WTC11 (cell line): ENCODE measurements at regions of chr19 and their contacts with region 1.

Region 1: DNA sequence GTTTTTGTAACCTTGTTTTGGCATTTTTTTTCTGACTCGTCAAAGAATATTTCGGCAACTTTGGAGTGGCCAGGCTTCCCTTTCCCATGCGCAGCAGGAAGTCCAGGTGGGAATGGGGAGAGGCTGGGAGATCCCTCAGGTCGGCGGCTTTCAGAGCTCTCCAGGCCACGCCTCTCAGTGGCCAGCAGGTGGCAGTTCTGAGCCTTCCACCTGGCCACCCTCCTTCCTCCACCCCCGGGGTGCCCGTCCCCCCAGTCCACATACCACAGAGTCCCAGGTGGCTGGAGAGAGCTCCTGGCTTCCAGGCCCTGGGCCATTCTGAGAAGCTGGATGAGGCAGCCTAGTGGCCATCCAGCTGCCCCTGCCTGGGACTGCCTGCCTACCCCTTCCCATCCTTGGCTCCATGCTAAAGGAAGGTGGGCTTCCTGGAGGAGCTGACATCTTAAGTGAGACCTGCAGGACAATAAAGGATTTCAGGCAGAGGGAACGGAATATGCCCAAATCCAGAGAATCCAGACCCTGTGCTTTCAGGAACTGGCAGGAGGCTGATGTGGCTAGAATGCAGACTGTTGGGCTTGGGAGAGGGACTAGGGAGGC is 46.3 kb downstream of the CCNE1 start:
- DNase-seq: peak; percentile 80
- ATAC-seq: peak; percentile 89
- H3K4me3 Mint-ChIP-seq: no peak overlapping the region
- H3K27ac Mint-ChIP-seq: no peak overlapping the region
- H3K4me1 Mint-ChIP-seq: peaks cover 13% of the 10 kb centered on the region
- H3K27me3 Mint-ChIP-seq: no peaks in the 10 kb centered on the region
- CTCF ChIP-seq: peak; percentile 74; the same call in 1 of the 2 replicates

Region 2: GRCh38 chr19:29771708-29772414 is 86.2 kb before region 1 on chr19:
- CTCF ChIA-PET with region 1: interaction called, 17 read pairs
- POLR2A ChIA-PET with region 1: no interaction called
- DNase-seq: peak; percentile 76
- ATAC-seq: peak; percentile 91
- H3K4me3 Mint-ChIP-seq: no peak overlapping the region
- H3K27ac Mint-ChIP-seq: no peak overlapping the region
- H3K4me1 Mint-ChIP-seq: peaks cover 15% of the 10 kb centered on the region
- H3K27me3 Mint-ChIP-seq: no peaks in the 10 kb centered on the region; the same call in 1 of the 2 replicates
- CTCF ChIP-seq: peak; percentile 33; the same call in 1 of the 2 replicates

Region 3: DNA sequence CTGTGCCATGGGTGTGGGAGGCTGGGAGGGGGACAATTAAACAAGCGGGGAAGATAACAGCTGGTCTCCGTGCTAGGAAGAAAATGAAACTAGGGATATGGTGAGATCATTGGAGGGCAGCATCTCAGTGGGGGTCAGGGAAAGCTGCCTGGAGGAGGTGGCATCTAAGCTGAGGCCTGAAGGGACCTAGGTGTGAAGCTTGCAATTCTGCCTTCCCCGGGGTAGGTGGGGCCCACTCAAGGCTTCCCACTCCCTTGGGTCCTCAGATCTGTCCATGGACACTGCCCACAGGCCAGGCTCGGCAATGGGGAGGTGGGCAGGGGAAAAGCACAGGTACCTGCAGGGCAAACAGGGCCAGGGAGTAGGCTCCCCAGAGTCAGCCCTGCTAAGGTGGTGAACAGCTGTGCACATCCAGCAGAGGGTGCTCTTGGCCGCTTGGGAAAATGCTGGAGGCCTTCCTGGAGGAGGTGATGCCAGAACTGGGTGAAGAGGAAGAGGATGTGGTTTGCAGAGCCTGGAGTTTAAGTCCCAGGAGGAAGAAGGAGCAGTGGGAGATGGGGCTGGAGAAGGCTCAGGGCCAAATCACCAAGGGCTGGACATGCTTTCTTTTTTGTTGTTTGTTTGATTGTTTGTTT is 72.0 kb before region 1 on chr19:
- CTCF ChIA-PET with region 1: interaction called, 14 read pairs
- POLR2A ChIA-PET with region 1: no interaction called
- DNase-seq: peak; percentile 65
- ATAC-seq: peak; percentile 89
- H3K4me3 Mint-ChIP-seq: no peak overlapping the region
- H3K27ac Mint-ChIP-seq: no peak overlapping the region
- H3K4me1 Mint-ChIP-seq: no peaks in the 10 kb centered on the region
- H3K27me3 Mint-ChIP-seq: no peaks in the 10 kb centered on the region
- CTCF ChIP-seq: no peak

Region 4: GRCh38 chr19:29844891-29845572 is 13.1 kb before region 1 on chr19:
- CTCF ChIA-PET with region 1: interaction called, 76 read pairs
- POLR2A ChIA-PET with region 1: interaction called, 3 read pairs
- DNase-seq: peak; percentile 93
- ATAC-seq: peak; percentile 83
- H3K4me3 Mint-ChIP-seq: peak overlapping the region; percentile 94
- H3K27ac Mint-ChIP-seq: peak overlapping the region; percentile 93
- H3K4me1 Mint-ChIP-seq: peaks cover 23% of the 10 kb centered on the region
- H3K27me3 Mint-ChIP-seq: peaks cover 16% of the 10 kb centered on the region
- CTCF ChIP-seq: no peak

Region 5: GRCh38 chr19:29878973-29879654 is 21.0 kb after region 1 on chr19:
- CTCF ChIA-PET with region 1: interaction called, 141 read pairs
- POLR2A ChIA-PET with region 1: no interaction called
- DNase-seq: peak; percentile 36
- ATAC-seq: peak; percentile 84
- H3K4me3 Mint-ChIP-seq: no peak overlapping the region
- H3K27ac Mint-ChIP-seq: no peak overlapping the region
- H3K4me1 Mint-ChIP-seq: peaks cover 12% of the 10 kb centered on the region
- H3K27me3 Mint-ChIP-seq: peaks cover 3% of the 10 kb centered on the region
- CTCF ChIP-seq: no peak

Region 6: GRCh38 chr19:29978080-29978479 is 120.0 kb after region 1 on chr19:
- CTCF ChIA-PET with region 1: no interaction called
- POLR2A ChIA-PET with region 1: no interaction called
- DNase-seq: no peak
- ATAC-seq: no peak
- H3K4me3 Mint-ChIP-seq: no peak overlapping the region
- H3K27ac Mint-ChIP-seq: no peak overlapping the region
- H3K4me1 Mint-ChIP-seq: peaks cover 29% of the 10 kb centered on the region
- H3K27me3 Mint-ChIP-seq: no peaks in the 10 kb centered on the region
- CTCF ChIP-seq: no peak